Mammary epithelial cell (primary cell): ENCODE measurements at regions of chr12 and their contacts with region 1.

Region 1: DNA sequence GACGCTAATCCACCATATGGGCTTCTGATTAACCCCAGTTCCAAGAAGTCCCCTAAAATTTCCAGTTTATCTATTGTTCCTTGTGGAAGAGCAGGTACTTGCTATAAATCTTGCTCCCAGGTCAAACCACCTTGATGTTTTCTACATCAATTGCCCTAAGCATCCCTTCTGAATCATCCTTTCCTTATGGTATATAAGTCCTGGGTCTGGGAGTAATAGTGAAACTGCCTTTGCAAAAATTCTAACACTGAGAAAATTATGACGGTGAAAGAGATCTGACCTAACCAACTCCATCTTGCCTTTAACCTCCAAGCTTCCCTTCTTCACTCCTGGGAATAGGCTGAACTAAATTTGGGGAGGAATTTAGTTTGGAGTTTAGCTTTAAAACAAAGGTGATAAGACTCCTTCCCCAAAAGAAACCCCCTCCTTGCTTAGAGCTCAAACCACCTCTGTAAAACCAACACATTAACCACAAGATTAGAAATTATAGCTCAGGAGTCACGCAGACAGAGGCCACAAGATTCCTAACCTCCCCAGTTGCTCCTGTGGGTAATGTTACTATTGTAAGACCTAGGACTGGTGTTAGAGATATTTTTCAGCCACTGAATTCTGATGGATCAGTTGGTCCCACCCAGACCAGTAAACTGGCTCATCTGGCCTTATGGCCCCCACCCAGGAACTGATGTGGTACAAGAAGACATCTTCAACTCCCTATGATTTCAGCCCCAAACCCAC is 33.8 kb upstream of the DTX1 start:
- DNase-seq: no peak
- H3K4me3 ChIP-seq: no peak overlapping the region
- H3K27ac ChIP-seq: no peak overlapping the region
- H3K4me1 ChIP-seq: peaks cover 20% of the 10 kb centered on the region
- H3K27me3 ChIP-seq: no peaks in the 10 kb centered on the region
- CTCF ChIP-seq: no peak

Region 2: DNA sequence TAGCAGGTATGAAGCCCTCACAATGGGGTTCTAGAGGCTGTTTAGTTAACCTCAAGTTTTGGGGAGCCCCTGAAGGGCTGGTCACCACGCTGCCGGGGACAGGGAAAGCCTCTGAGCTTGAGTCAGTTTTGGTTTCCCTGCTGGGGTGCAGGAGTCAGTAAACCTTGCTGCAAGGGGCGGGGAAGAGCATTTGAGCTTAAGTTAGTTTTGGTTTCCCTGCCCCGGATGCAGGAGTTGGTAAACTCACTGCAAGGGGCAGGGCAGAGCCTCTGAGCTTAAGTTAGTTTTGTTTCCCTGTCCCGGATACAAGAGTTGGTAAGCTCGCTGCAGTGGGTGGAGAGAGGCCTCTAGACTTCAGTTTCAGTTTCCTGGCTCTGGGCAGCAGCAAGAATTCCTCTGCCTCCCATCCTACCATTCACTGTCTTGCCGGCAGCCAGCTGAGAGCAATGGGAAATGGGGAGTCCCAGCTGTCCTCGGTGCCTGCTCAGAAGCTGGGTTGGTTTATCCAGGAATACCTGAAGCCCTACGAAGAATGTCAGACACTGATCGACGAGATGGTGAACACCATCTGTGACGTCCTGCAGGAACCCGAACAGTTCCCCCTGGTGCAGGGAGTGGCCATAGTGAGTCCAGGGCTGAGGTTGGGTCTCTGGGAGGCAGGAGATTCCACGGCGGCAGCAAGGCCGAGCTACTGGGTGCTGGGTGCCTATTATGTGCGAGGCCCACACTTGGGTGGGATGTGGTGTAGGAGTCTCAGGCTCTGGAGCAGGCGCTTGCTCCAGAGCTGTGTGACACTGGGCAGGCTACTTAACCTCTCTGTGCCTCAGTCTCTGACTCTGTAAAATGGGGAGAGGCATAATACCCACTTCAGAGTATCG is 44.3 kb before region 1 on chr12 and contains the start of gene OAS2:
- CTCF ChIA-PET with region 1: no interaction called
- dilution Hi-C with region 1: no loop called
- in situ Hi-C with region 1: no loop called
- intact Hi-C with region 1: no loop called
- DNase-seq: peak; percentile 71
- H3K4me3 ChIP-seq: peak within 1 kb of the TSS; percentile 10 to 34 (median 13)
- H3K27ac ChIP-seq: no peak within 1 kb of the TSS
- H3K4me1 ChIP-seq: peaks cover 7% of the 10 kb centered on the region
- H3K27me3 ChIP-seq: no peaks in the 10 kb centered on the region
- CTCF ChIP-seq: no peak
- total RNA-seq, gene OAS2: 0.83 to 4.8 TPM

Region 3: GRCh38 chr12:113092607-113093408 is 70.1 kb after region 1 on chr12:
- CTCF ChIA-PET with region 1: no interaction called
- dilution Hi-C with region 1: loop called (anchors 5 kb)
- in situ Hi-C with region 1: no loop called
- intact Hi-C with region 1: no loop called
- DNase-seq: no peak
- H3K4me3 ChIP-seq: no peak overlapping the region
- H3K27ac ChIP-seq: no peak overlapping the region
- H3K4me1 ChIP-seq: peaks cover 5% of the 10 kb centered on the region
- H3K27me3 ChIP-seq: peaks cover 2% of the 10 kb centered on the region
- CTCF ChIP-seq: peak in 1 of 2 donors; percentile 44